Activated CD4-positive, alpha-beta T cell treated with anti-CD3 and anti-CD28 coated beads for 36 hours (primary cell): ENCODE measurements at regions of chr6 and their contacts with region 1.

Region 1: DNA sequence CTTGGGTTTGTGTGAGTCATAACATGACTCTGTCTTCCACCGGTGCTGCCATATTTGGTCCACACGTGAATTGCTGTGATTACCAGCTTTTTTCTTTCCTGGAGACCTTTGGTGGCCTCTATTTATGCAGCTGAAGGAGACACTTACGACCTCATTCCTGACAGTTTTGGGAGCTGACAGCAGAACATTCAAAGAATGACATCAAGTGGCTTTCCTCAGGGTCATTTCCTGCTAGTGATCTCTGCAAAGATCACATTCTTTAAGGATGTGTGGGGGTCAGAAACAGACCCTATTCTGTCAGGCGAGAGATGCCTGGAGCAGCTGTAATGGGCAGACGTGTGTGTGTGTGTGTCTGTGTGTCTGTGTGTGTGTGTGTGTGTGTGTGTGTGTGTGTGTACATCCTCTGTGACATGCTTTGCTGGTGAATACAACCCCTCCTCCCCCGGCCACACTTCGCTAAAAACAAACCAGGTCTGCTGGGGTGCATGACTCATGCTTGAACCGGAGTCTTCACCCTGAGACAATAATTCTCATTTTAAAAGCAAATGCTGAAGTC is 115.6 kb downstream of the TMEM170B start:
- DNase-seq: peak; percentile 76
- ATAC-seq: peak; percentile 90
- H3K4me3 Mint-ChIP-seq: no peak overlapping the region
- H3K27ac Mint-ChIP-seq: peak overlapping the region; percentile 19
- H3K4me1 Mint-ChIP-seq: peaks cover 11% of the 10 kb centered on the region
- H3K27me3 Mint-ChIP-seq: peaks cover 4% of the 10 kb centered on the region

Region 2: DNA sequence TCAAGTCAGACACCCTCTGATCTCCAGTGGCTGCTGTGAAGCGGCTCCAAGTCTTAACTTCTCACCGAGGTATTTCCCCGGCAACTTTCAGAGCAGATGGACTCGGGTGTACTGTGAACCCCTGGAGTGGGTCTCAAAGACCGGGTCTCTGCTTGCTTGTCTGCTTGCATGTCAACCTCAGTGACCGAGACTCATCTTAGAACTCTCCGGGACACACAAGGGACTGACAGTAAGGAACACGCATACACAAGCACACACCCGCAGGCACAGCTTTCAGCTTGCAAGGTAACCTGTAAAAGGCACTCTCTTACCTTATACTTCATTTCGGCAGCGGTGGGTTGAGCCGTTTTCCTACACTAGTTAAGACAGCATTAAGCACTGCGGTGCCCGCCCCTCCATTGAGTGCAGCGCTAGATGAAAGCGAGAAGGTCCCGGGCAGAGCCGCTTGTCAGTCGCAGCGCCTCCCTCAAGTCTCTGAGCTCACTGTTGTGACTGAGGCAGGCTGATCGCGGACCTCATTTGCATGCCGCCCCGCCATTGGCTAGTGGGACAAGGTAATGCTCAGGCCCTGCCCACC is 420.8 kb before region 1 on chr6 and contains the start of gene NEDD9:
- CTCF ChIA-PET with region 1: no interaction called
- POLR2A ChIA-PET with region 1: no interaction called
- intact Hi-C with region 1: no loop called
- DNase-seq: peak; percentile 97
- ATAC-seq: peak; percentile 96
- H3K4me3 Mint-ChIP-seq: peak within 1 kb of the TSS; percentile 81
- H3K27ac Mint-ChIP-seq: peak within 1 kb of the TSS; percentile 95
- H3K4me1 Mint-ChIP-seq: peaks cover 65% of the 10 kb centered on the region
- H3K27me3 Mint-ChIP-seq: no peaks in the 10 kb centered on the region
- total RNA-seq, gene NEDD9: 23.6 to 27.3 TPM

Region 3: DNA sequence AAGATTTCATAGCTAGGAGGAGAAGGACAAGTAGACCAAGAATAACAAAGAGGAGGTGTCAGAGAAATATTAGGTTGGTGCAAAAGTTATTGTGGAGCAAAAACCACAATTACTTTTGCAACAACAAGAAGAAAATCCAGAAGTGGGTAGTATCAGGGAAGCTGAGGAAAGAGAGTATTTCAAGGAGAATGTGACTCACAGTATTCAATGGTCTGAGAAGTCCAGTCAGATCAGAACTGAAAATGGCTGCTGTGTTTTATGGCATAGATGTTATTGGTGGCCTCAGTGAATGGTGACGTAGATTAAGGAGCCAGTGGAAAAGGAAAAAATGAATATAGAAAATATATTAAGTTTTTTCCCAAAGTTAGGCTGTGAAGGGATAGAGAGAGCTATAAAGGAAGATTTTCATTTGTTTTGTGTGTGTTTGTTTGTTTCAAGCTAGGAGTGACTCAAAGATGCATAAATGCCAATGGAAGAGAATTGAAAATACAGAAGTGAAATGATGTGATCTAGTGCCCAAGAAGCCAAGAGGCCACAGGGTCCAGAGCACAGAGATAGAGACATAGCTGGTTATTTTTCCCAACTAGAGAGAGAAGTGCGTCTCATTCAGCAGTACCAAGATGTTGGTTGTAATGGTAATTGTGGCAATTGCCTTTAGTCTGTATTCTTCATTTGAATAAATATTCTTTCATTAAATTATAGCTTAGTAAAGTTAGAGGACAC is 12.7 kb after region 1 on chr6:
- CTCF ChIA-PET with region 1: interaction called, 30 read pairs
- POLR2A ChIA-PET with region 1: no interaction called
- intact Hi-C with region 1: no loop called
- DNase-seq: no peak
- ATAC-seq: peak; percentile 77
- H3K4me3 Mint-ChIP-seq: no peak overlapping the region
- H3K27ac Mint-ChIP-seq: no peak overlapping the region
- H3K4me1 Mint-ChIP-seq: peaks cover 13% of the 10 kb centered on the region
- H3K27me3 Mint-ChIP-seq: peaks cover 5% of the 10 kb centered on the region

Region 4: GRCh38 chr6:12233693-12234571 is 580.8 kb after region 1 on chr6:
- CTCF ChIA-PET with region 1: interaction called, 11 read pairs
- POLR2A ChIA-PET with region 1: no interaction called
- intact Hi-C with region 1: loop called (anchors 1 kb)
- DNase-seq: peak; percentile 43
- ATAC-seq: peak; percentile 93
- H3K4me3 Mint-ChIP-seq: no peak overlapping the region
- H3K27ac Mint-ChIP-seq: no peak overlapping the region
- H3K4me1 Mint-ChIP-seq: peaks cover 40% of the 10 kb centered on the region
- H3K27me3 Mint-ChIP-seq: no peaks in the 10 kb centered on the region

Region 5: GRCh38 chr6:12504319-12504966 is 851.3 kb after region 1 on chr6:
- CTCF ChIA-PET with region 1: no interaction called
- POLR2A ChIA-PET with region 1: no interaction called
- intact Hi-C with region 1: loop called in 1 of 2 experiments (anchors 10 kb)
- DNase-seq: no peak
- ATAC-seq: peak; percentile 66
- H3K4me3 Mint-ChIP-seq: no peak overlapping the region
- H3K27ac Mint-ChIP-seq: no peak overlapping the region
- H3K4me1 Mint-ChIP-seq: no peaks in the 10 kb centered on the region
- H3K27me3 Mint-ChIP-seq: peaks cover 8% of the 10 kb centered on the region

Region 6: GRCh38 chr6:12890171-12890790 is 1237.2 kb after region 1 on chr6:
- CTCF ChIA-PET with region 1: interaction called, 4 read pairs
- POLR2A ChIA-PET with region 1: no interaction called
- intact Hi-C with region 1: loop called (anchors 2 to 5 kb)
- DNase-seq: peak; percentile 50
- ATAC-seq: no peak
- H3K4me3 Mint-ChIP-seq: no peak overlapping the region
- H3K27ac Mint-ChIP-seq: no peak overlapping the region
- H3K4me1 Mint-ChIP-seq: no peaks in the 10 kb centered on the region
- H3K27me3 Mint-ChIP-seq: peaks cover 3% of the 10 kb centered on the region